ENCODE measurements at regions of chr6 and their contacts with region 1.

Region 1: DNA sequence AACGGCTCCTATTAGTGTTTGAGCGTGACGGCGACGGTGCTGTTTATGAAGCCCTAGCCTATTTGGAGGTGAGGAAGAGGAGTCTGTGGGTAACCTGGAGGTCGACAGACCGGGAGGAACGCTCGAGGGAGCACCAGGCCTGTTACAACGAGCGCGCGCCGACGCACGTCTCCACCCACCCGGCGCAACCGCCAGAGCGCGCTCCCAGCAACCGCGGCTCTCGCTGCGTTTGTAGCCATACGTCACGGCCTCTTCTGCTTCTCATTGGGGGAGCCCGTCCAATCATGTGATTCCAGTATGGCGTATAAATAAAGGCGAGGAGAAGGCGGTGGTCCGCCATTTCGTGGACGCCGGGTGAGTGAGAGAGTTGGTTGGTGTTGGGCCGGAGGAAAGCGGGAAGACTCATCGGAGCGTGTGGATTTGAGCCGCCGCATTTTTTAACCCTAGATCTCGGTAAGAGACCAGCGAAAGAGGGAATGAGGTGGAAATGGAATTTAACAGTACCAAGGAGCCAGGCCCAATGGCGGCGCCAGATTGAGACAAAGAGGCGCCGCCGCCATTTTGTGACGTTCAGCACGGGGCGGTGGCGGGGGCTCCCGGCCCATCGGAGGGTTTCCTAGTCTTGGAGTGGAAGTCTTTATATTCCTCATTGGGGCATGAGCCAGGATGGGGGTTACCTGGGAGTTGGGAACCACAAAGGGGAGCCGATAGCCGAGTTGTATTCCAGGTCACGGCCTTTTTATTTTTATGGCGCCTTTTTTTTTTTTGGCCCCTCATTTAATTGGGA is at the start of gene SRSF3:
- DNase-seq: peak; percentile 97 to 98 (median 98)
- H3K4me3 ChIP-seq: peak within 1 kb of the TSS; percentile 89 to 91
- H3K4me3 Mint-ChIP-seq: peak within 1 kb of the TSS; percentile 92 to 100 (median 98)
- H3K27ac ChIP-seq: peak within 1 kb of the TSS; percentile 94
- H3K27ac Mint-ChIP-seq: peak within 1 kb of the TSS; percentile 97 to 100 (median 99)
- H3K4me1 ChIP-seq: peaks cover 46% of the 10 kb centered on the region
- H3K4me1 Mint-ChIP-seq: peaks cover 20 to 58% (median 35%) of the 10 kb centered on the region in 4 donors
- H3K27me3 ChIP-seq: no peaks in the 10 kb centered on the region
- H3K27me3 Mint-ChIP-seq: no peaks in the 10 kb centered on the region
- total RNA-seq, gene SRSF3: 337 to 350 TPM

Region 2: GRCh38 chr6:36423101-36423824 is 171.0 kb before region 1 on chr6:
- CTCF ChIA-PET with region 1: interaction called, 5 read pairs
- POLR2A ChIA-PET with region 1: interaction called, 12 read pairs
- intact Hi-C with region 1: loop called (anchors 1 kb)
- DNase-seq: peak; percentile 97 to 99 (median 97)
- H3K4me3 ChIP-seq: peak overlapping the region; percentile 69 to 85
- H3K4me3 Mint-ChIP-seq: peak overlapping the region; percentile 91 to 95 (median 93)
- H3K27ac ChIP-seq: peak overlapping the region; percentile 68
- H3K27ac Mint-ChIP-seq: peak overlapping the region; percentile 73 to 97 (median 95)
- H3K4me1 ChIP-seq: peaks cover 15% of the 10 kb centered on the region
- H3K4me1 Mint-ChIP-seq: peaks cover 10 to 19% (median 14%) of the 10 kb centered on the region in 4 donors
- H3K27me3 ChIP-seq: no peaks in the 10 kb centered on the region
- H3K27me3 Mint-ChIP-seq: no peaks in the 10 kb centered on the region

Region 3: DNA sequence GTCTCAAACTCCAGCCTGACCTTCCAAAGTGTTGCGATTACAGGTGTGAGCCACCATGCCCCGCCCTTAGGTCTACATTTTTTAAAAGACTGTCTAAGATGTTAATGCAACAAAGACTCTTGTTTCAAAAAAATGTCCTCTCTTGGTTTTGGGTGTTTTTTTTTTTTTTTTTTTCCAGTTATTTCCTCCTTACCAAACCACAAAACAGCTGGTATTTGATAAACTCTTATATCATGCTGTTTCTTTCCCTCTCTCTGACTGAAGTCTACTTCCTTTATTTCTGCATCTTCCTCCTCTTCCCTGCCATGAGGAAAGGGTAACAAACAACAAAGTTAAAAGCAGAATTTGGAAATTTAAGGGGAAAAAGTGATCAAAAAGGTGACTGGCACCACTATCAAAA is 68.2 kb before region 1 on chr6:
- CTCF ChIA-PET with region 1: no interaction called
- POLR2A ChIA-PET with region 1: interaction called, 11 read pairs
- intact Hi-C with region 1: no loop called
- DNase-seq: no peak
- H3K4me3 ChIP-seq: no peak overlapping the region
- H3K4me3 Mint-ChIP-seq: peak overlapping the region in 1 of 8 donors; percentile 43
- H3K27ac ChIP-seq: no peak overlapping the region
- H3K27ac Mint-ChIP-seq: peak overlapping the region in 3 of 7 donors; percentile 19 to 71 (median 61)
- H3K4me1 ChIP-seq: peaks cover 42% of the 10 kb centered on the region
- H3K4me1 Mint-ChIP-seq: peaks cover 32 to 63% (median 39%) of the 10 kb centered on the region in 4 donors
- H3K27me3 ChIP-seq: no peaks in the 10 kb centered on the region
- H3K27me3 Mint-ChIP-seq: no peaks in the 10 kb centered on the region

Region 4: DNA sequence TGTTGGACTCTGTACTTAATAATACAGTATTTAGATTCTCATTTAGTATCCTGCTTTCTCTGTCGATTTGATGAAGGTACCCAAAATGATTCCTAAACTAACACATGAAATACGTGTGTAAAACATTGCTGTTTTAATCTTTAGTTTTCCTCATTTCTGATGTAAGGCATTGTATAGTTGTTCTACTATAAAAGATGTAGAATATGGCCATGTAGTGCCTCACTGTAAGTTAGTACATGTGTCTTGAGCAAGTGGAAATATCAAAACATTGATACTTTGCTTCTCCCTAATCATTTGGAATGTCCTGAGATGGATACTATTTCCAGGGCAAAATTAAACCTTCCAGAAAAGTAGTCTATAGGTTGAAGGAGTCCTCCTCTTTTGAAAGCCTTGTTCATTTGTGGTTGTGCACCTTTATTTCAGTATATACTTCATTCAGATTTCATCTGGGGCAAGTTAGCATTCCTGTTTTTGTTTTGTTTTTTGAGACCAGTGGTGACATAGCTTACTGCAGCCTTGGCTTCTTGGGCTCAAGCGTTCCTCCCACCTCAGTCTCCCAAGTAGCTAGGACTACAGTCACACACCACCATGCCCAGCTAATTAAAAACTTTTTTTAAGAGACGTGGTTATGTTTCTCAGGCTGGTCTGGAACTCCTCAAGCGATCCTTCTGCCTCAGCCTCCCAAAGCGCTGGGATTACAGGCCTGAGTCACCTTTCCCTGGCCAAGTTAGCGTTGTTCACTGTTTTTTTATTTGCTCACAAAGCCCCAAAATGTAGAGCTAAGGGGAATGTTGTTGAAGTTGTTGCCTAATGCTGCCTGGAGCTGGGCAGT is 11.6 kb after region 1 on chr6:
- CTCF ChIA-PET with region 1: interaction called, 5 read pairs
- POLR2A ChIA-PET with region 1: interaction called, 148 read pairs
- intact Hi-C with region 1: no loop called
- DNase-seq: peak in 1 of 5 donors; percentile 16
- H3K4me3 ChIP-seq: no peak overlapping the region
- H3K4me3 Mint-ChIP-seq: peak overlapping the region in 5 of 8 donors; percentile 0 to 48 (median 9)
- H3K27ac ChIP-seq: peak overlapping the region; percentile 3
- H3K27ac Mint-ChIP-seq: peak overlapping the region; percentile 47 to 97 (median 81)
- H3K4me1 ChIP-seq: peaks cover 96% of the 10 kb centered on the region
- H3K4me1 Mint-ChIP-seq: peaks cover 53 to 89% (median 74%) of the 10 kb centered on the region in 4 donors
- H3K27me3 ChIP-seq: no peaks in the 10 kb centered on the region
- H3K27me3 Mint-ChIP-seq: no peaks in the 10 kb centered on the region

Region 5: DNA sequence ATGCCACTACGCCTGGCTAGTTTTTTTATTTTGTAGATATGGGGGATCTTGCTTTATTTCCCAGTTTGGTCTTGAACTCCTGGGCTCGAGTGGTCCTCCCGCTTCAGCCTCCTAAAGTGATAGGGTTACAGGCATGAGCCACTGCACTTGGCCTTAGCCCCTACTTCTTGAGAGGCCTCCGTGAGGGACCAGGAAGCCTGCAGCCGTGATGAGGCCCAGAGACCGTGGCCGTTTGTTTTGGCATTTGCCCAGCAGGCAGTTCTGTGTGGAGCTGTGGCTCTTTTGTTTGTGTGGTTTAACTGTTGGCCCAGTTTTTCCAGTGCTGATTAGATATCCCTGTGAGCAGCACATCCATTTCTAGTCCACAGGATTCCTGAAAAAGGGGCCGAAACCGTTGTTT is 39.7 kb after region 1 on chr6:
- CTCF ChIA-PET with region 1: no interaction called
- POLR2A ChIA-PET with region 1: no interaction called
- intact Hi-C with region 1: no loop called
- DNase-seq: no peak
- H3K4me3 ChIP-seq: no peak overlapping the region
- H3K4me3 Mint-ChIP-seq: no peak overlapping the region
- H3K27ac ChIP-seq: no peak overlapping the region
- H3K27ac Mint-ChIP-seq: no peak overlapping the region
- H3K4me1 ChIP-seq: no peaks in the 10 kb centered on the region
- H3K4me1 Mint-ChIP-seq: no peaks in the 10 kb centered on the region
- H3K27me3 ChIP-seq: no peaks in the 10 kb centered on the region
- H3K27me3 Mint-ChIP-seq: no peaks in the 10 kb centered on the region

Region 6: GRCh38 chr6:36874443-36875249 is 280.4 kb after region 1 on chr6 and contains the start of gene PPIL1:
- CTCF ChIA-PET with region 1: no interaction called
- POLR2A ChIA-PET with region 1: interaction called, 4 read pairs
- intact Hi-C with region 1: loop called (anchors 1 kb)
- DNase-seq: peak; percentile 91 to 94 (median 92)
- H3K4me3 ChIP-seq: peak within 1 kb of the TSS; percentile 95 to 96
- H3K4me3 Mint-ChIP-seq: peak within 1 kb of the TSS; percentile 95 to 100 (median 98)
- H3K27ac ChIP-seq: peak within 1 kb of the TSS; percentile 87
- H3K27ac Mint-ChIP-seq: peak within 1 kb of the TSS; percentile 91 to 100 (median 98)
- H3K4me1 ChIP-seq: peaks cover 23% of the 10 kb centered on the region
- H3K4me1 Mint-ChIP-seq: peaks cover 22 to 37% (median 31%) of the 10 kb centered on the region in 4 donors
- H3K27me3 ChIP-seq: no peaks in the 10 kb centered on the region
- H3K27me3 Mint-ChIP-seq: peaks cover 0 to 1% of the 10 kb centered on the region in 2 donors
- total RNA-seq, gene PPIL1: 8.4 to 9.2 TPM

Region 7: GRCh38 chr6:36929607-36930006 is 335.4 kb after region 1 on chr6:
- CTCF ChIA-PET with region 1: no interaction called
- POLR2A ChIA-PET with region 1: no interaction called
- intact Hi-C with region 1: no loop called
- DNase-seq: no peak
- H3K4me3 ChIP-seq: no peak overlapping the region
- H3K4me3 Mint-ChIP-seq: no peak overlapping the region
- H3K27ac ChIP-seq: no peak overlapping the region
- H3K27ac Mint-ChIP-seq: peak overlapping the region in 4 of 7 donors; percentile 22 to 76 (median 52)
- H3K4me1 ChIP-seq: no peaks in the 10 kb centered on the region
- H3K4me1 Mint-ChIP-seq: peaks cover 0 to 2% (median under 1%) of the 10 kb centered on the region in 4 donors
- H3K27me3 ChIP-seq: no peaks in the 10 kb centered on the region
- H3K27me3 Mint-ChIP-seq: no peaks in the 10 kb centered on the region

Measured in CD4-positive, alpha-beta memory T cell (primary cell).